GM12878 (cell line): ENCODE measurements at regions of chr1 and their contacts with region 1.

Region 1: DNA sequence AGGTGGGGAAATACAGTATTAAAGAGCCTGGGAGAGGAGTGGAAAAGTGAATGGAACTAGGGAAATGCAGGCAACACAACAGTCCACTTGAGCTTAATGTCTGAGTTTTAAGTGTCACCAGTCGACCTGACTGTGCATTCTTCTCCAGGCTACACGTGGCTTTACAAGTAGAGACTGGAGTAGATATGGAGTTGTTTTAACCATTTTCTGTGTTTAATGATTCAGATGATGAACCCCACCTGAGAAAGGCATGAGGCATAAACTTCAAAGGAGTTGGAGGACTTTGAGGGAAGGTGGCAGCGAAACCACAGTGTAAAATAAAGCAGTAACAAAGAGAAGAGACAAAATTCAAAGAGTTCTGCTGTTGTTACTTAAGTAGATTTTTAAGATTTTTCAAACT is 12.6 kb downstream of the FUBP1 start:
- DNase-seq: no peak
- ATAC-seq: no peak
- H3K4me3 ChIP-seq: no peak overlapping the region
- H3K27ac ChIP-seq: no peak overlapping the region
- H3K4me1 ChIP-seq: no peaks in the 10 kb centered on the region
- H3K27me3 ChIP-seq: no peaks in the 10 kb centered on the region
- CTCF ChIP-seq: no peak
- EP300 ChIP-seq: no peak
- POLR2A ChIP-seq: no peak
- RAD21 ChIP-seq: no peak

Region 2: GRCh38 chr1:77948841-77949424 is 17.4 kb before region 1 on chr1:
- CTCF ChIA-PET with region 1: interaction called, 3 read pairs
- POLR2A ChIA-PET with region 1: interaction called, 3 read pairs
- RAD21 ChIA-PET with region 1: no interaction called
- SMC1A ChIA-PET with region 1: interaction called, 7 read pairs
- in situ Hi-C with region 1: no loop called
- intact Hi-C with region 1: loop called (anchors 2 kb)
- DNase-seq: no peak
- ATAC-seq: peak; percentile 49
- H3K4me3 ChIP-seq: no peak overlapping the region
- H3K27ac ChIP-seq: no peak overlapping the region
- H3K4me1 ChIP-seq: peaks cover 16% of the 10 kb centered on the region
- H3K27me3 ChIP-seq: no peaks in the 10 kb centered on the region
- CTCF ChIP-seq: peak; percentile 13 to 21 (median 19); a peak in 3 of 6 replicates
- EP300 ChIP-seq: no peak
- POLR2A ChIP-seq: no peak
- RAD21 ChIP-seq: no peak

Region 3: GRCh38 chr1:77954521-77954920 is 11.8 kb before region 1 on chr1:
- CTCF ChIA-PET with region 1: interaction called, 5 read pairs
- POLR2A ChIA-PET with region 1: interaction called, 4 read pairs
- RAD21 ChIA-PET with region 1: interaction called, 3 read pairs
- SMC1A ChIA-PET with region 1: interaction called, 14 read pairs
- in situ Hi-C with region 1: no loop called
- intact Hi-C with region 1: loop called (anchors 2 kb)
- DNase-seq: no peak
- ATAC-seq: no peak
- H3K4me3 ChIP-seq: no peak overlapping the region
- H3K27ac ChIP-seq: no peak overlapping the region
- H3K4me1 ChIP-seq: peaks cover 16% of the 10 kb centered on the region
- H3K27me3 ChIP-seq: no peaks in the 10 kb centered on the region
- CTCF ChIP-seq: no peak
- EP300 ChIP-seq: no peak
- POLR2A ChIP-seq: no peak
- RAD21 ChIP-seq: no peak